Common myeloid progenitor, CD34-positive (primary cell): ENCODE measurements at regions of chr1 and their contacts with region 1.

Region 1: GRCh38 chr1:165914136-165914798 is 86.9 kb downstream of the UCK2 start:
- DNase-seq: peak; percentile 74 to 87 (median 83)
- H3K4me3 ChIP-seq: no peak overlapping the region
- H3K27ac ChIP-seq: no peak overlapping the region
- H3K4me1 ChIP-seq: no peaks in the 10 kb centered on the region
- H3K27me3 ChIP-seq: no peaks in the 10 kb centered on the region

Region 2: DNA sequence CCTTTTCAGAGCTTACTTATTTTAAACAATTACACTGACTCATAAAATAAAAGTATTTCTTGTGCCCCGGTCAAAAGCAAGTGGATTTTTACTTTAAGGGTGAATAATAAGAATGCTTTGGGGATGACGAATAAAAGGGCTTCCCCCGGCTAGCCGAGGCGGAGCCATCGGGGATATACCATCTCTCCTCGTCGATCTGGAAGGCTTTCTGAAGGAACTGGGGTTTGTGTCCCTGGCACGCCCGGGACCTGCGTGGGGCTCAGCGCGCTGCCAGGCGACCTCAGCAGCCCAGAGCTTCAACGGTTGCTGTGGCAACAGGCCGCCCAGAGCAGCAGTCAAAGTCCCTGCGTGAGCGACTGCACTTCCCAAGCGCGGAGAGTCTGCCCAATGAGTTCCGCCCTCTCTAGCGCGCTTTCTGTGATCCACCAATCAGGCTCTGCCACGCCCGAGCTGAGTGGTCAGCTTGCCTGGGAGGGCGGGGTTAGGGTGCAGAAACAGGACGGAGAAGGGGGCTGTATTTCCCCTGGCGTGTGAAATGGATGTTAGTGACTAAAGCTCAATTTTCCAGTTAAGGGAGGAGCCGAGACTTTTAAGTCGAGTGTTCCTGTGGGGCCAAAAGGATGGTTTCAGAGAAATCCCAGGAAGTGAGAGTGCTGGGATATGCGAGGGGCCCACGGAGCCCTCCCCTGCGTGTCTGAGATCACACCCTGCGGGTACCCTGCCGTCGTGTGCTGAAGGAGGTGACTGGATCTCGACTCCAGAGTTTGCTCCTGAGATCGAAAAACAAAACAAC is 316.2 kb before region 1 on chr1:
- CTCF ChIA-PET with region 1: interaction called, 49 read pairs
- POLR2A ChIA-PET with region 1: no interaction called
- DNase-seq: peak; percentile 95 to 98 (median 96)
- H3K4me3 ChIP-seq: peak overlapping the region in 6 of 7 experiments; percentile 63 to 80 (median 72)
- H3K27ac ChIP-seq: peak overlapping the region; percentile 77 to 85
- H3K4me1 ChIP-seq: peaks cover 0 to 16% (median 15%) of the 10 kb centered on the region in 4 experiments
- H3K27me3 ChIP-seq: peaks cover 11 to 45% (median 23%) of the 10 kb centered on the region in 5 experiments

Region 3: GRCh38 chr1:165717918-165718515 is 196.2 kb before region 1 on chr1:
- CTCF ChIA-PET with region 1: interaction called, 21 read pairs
- POLR2A ChIA-PET with region 1: no interaction called
- DNase-seq: peak; percentile 65 to 78 (median 78)
- H3K4me3 ChIP-seq: no peak overlapping the region
- H3K27ac ChIP-seq: no peak overlapping the region
- H3K4me1 ChIP-seq: no peaks in the 10 kb centered on the region
- H3K27me3 ChIP-seq: no peaks in the 10 kb centered on the region

Region 4: GRCh38 chr1:165903672-165904071 is 10.6 kb before region 1 on chr1:
- CTCF ChIA-PET with region 1: interaction called, 21 read pairs
- POLR2A ChIA-PET with region 1: no interaction called
- DNase-seq: no peak
- H3K4me3 ChIP-seq: no peak overlapping the region
- H3K27ac ChIP-seq: no peak overlapping the region
- H3K4me1 ChIP-seq: peaks cover 0 to 8% (median 7%) of the 10 kb centered on the region in 4 experiments
- H3K27me3 ChIP-seq: no peaks in the 10 kb centered on the region

Region 5: GRCh38 chr1:165928075-165928731 is 13.9 kb after region 1 on chr1:
- CTCF ChIA-PET with region 1: interaction called, 10 read pairs
- POLR2A ChIA-PET with region 1: no interaction called
- DNase-seq: peak; percentile 58 to 78 (median 74)
- H3K4me3 ChIP-seq: no peak overlapping the region
- H3K27ac ChIP-seq: no peak overlapping the region
- H3K4me1 ChIP-seq: no peaks in the 10 kb centered on the region
- H3K27me3 ChIP-seq: peaks cover 0 to 18% (median 0%) of the 10 kb centered on the region in 5 experiments